Caco-2 (cell line): ENCODE measurements at regions of chr16 and their contacts with region 1.

Region 1: GRCh38 chr16:84555418-84556195 is 51.1 kb upstream of the MEAK7 start:
- DNase-seq: peak; percentile 64 to 78
- H3K4me3 ChIP-seq: no peak overlapping the region
- H3K4me3 Mint-ChIP-seq: peak overlapping the region; percentile 36
- H3K27ac Mint-ChIP-seq: peak overlapping the region; percentile 77
- H3K4me1 ChIP-seq: peaks cover 57% of the 10 kb centered on the region
- H3K4me1 Mint-ChIP-seq: peaks cover 56% of the 10 kb centered on the region
- H3K27me3 ChIP-seq: no peaks in the 10 kb centered on the region
- H3K27me3 Mint-ChIP-seq: no peaks in the 10 kb centered on the region
- CTCF ChIP-seq: no peak

Region 2: DNA sequence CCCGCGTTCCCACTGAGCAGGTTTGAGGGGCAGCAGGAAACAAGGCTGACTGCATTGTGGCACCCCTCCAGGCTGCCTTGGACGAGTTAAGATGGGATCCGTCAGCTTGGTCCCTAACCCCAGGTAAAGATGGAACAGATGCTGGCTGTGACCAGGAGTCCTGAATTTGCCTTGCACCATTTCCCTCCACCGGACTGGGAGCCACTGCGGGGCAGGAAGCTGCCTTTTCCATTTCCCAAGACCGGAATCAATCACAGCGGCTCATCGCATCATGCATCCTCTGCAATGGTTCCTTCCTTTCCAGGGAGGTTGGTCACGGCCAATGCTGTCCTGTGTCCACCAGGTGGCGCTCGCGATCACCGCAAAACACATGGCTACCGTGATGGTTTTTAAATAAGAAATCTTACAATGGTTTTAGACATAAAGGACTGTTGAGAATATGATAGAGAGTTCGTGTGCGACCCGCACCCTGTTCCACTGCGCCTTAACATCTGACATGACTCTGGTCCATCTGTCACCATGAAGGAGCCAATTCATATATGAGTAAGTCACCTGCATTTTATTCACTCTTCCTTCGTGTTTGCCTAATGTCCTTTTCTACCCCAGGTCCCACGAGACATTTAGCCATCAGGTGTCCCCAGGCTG is 44.3 kb before region 1 on chr16:
- CTCF ChIA-PET with region 1: interaction called, 8 read pairs
- POLR2A ChIA-PET with region 1: no interaction called
- intact Hi-C with region 1: loop called (anchors 1 kb)
- DNase-seq: peak; percentile 78 to 88
- H3K4me3 ChIP-seq: no peak overlapping the region
- H3K4me3 Mint-ChIP-seq: peak overlapping the region; percentile 21
- H3K27ac Mint-ChIP-seq: peak overlapping the region; percentile 56
- H3K4me1 ChIP-seq: peaks cover 36% of the 10 kb centered on the region
- H3K4me1 Mint-ChIP-seq: peaks cover 43% of the 10 kb centered on the region
- H3K27me3 ChIP-seq: no peaks in the 10 kb centered on the region
- H3K27me3 Mint-ChIP-seq: no peaks in the 10 kb centered on the region
- CTCF ChIP-seq: peak; percentile 91 to 95